Activated B cell treated with CpG ODN at 0.5 μM for 24 hours (primary cell): ENCODE measurements at regions of chr11 and their contacts with region 1.

Region 1: GRCh38 chr11:44911029-44911814 is 39.5 kb downstream of the TP53I11 start:
- DNase-seq: peak; percentile 57
- ATAC-seq: peak; percentile 80
- H3K4me3 Mint-ChIP-seq: no peak overlapping the region
- H3K27ac Mint-ChIP-seq: no peak overlapping the region
- H3K4me1 Mint-ChIP-seq: peaks cover 20% of the 10 kb centered on the region
- H3K27me3 Mint-ChIP-seq: no peaks in the 10 kb centered on the region
- CTCF ChIP-seq: peak; percentile 39

Region 2: GRCh38 chr11:44016131-44016530 is 895.1 kb before region 1 on chr11:
- CTCF ChIA-PET with region 1: no interaction called
- POLR2A ChIA-PET with region 1: no interaction called
- intact Hi-C with region 1: no loop called
- DNase-seq: no peak
- ATAC-seq: no peak
- H3K4me3 Mint-ChIP-seq: no peak overlapping the region
- H3K27ac Mint-ChIP-seq: no peak overlapping the region
- H3K4me1 Mint-ChIP-seq: no peaks in the 10 kb centered on the region
- H3K27me3 Mint-ChIP-seq: peaks cover 3% of the 10 kb centered on the region
- CTCF ChIP-seq: no peak

Region 3: GRCh38 chr11:44110231-44110679 is 801.0 kb before region 1 on chr11:
- CTCF ChIA-PET with region 1: no interaction called
- POLR2A ChIA-PET with region 1: no interaction called
- intact Hi-C with region 1: loop called (anchors 1 kb)
- DNase-seq: peak; percentile 26
- ATAC-seq: peak; percentile 96
- H3K4me3 Mint-ChIP-seq: no peak overlapping the region
- H3K27ac Mint-ChIP-seq: no peak overlapping the region
- H3K4me1 Mint-ChIP-seq: peaks cover 5% of the 10 kb centered on the region
- H3K27me3 Mint-ChIP-seq: no peaks in the 10 kb centered on the region
- CTCF ChIP-seq: peak; percentile 68

Region 4: GRCh38 chr11:44519989-44520737 is 391.1 kb before region 1 on chr11:
- CTCF ChIA-PET with region 1: interaction called, 12 read pairs
- POLR2A ChIA-PET with region 1: no interaction called
- intact Hi-C with region 1: loop called (anchors 1 kb)
- DNase-seq: no peak
- ATAC-seq: no peak
- H3K4me3 Mint-ChIP-seq: no peak overlapping the region
- H3K27ac Mint-ChIP-seq: no peak overlapping the region
- H3K4me1 Mint-ChIP-seq: no peaks in the 10 kb centered on the region
- H3K27me3 Mint-ChIP-seq: peaks cover 30% of the 10 kb centered on the region
- CTCF ChIP-seq: no peak

Region 5: GRCh38 chr11:44556735-44557409 is 354.4 kb before region 1 on chr11:
- CTCF ChIA-PET with region 1: interaction called, 22 read pairs
- POLR2A ChIA-PET with region 1: no interaction called
- intact Hi-C with region 1: loop called (anchors 1 kb)
- DNase-seq: no peak
- ATAC-seq: peak; percentile 51
- H3K4me3 Mint-ChIP-seq: peak overlapping the region; percentile 49
- H3K27ac Mint-ChIP-seq: peak overlapping the region; percentile 90
- H3K4me1 Mint-ChIP-seq: peaks cover 64% of the 10 kb centered on the region
- H3K27me3 Mint-ChIP-seq: no peaks in the 10 kb centered on the region
- CTCF ChIP-seq: peak; percentile 21

Region 6: GRCh38 chr11:44727373-44728287 is 183.6 kb before region 1 on chr11:
- CTCF ChIA-PET with region 1: interaction called, 5 read pairs
- POLR2A ChIA-PET with region 1: no interaction called
- intact Hi-C with region 1: loop called (anchors 1 kb)
- DNase-seq: peak; percentile 72
- ATAC-seq: peak; percentile 71
- H3K4me3 Mint-ChIP-seq: peak overlapping the region; percentile 86
- H3K27ac Mint-ChIP-seq: no peak overlapping the region
- H3K4me1 Mint-ChIP-seq: peaks cover 22% of the 10 kb centered on the region
- H3K27me3 Mint-ChIP-seq: peaks cover 15% of the 10 kb centered on the region
- CTCF ChIP-seq: no peak

Region 7: DNA sequence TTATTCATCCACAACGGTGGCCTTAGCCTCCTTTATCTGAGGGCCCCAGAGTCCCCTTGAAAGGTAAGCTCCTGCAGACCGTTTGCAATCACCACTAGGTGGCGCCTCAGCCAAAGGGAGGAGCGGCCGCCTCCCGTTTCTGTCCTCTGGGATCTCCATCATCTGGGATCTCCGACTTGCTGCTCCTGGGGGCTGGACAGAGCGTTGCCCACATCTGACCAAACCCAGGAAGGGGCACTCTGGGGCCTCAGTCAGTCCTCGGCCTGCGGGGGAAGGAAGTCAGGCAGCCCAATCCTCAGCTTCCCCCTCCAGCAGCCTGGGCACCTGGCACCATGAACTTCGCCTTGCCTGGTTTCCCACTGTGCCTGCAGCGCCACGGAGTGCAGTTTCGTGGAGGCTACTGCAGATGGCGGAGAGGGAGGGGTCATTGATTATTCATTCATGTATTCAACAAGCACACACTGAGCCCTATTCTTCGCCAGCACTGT is 16.0 kb after region 1 on chr11:
- CTCF ChIA-PET with region 1: interaction called, 12 read pairs
- POLR2A ChIA-PET with region 1: no interaction called
- intact Hi-C with region 1: no loop called
- DNase-seq: peak; percentile 59
- ATAC-seq: peak; percentile 61
- H3K4me3 Mint-ChIP-seq: no peak overlapping the region
- H3K27ac Mint-ChIP-seq: no peak overlapping the region
- H3K4me1 Mint-ChIP-seq: peaks cover 3% of the 10 kb centered on the region
- H3K27me3 Mint-ChIP-seq: peaks cover 2% of the 10 kb centered on the region
- CTCF ChIP-seq: peak; percentile 38